MCF 10A (cell line): ENCODE measurements at regions of chr18 and their contacts with region 1.

Region 1: GRCh38 chr18:23703057-23703986 is 14.1 kb downstream of the LAMA3 start:
- DNase-seq: peak; percentile 76
- H3K4me3 Mint-ChIP-seq: no peak overlapping the region
- H3K27ac Mint-ChIP-seq: no peak overlapping the region
- H3K4me1 Mint-ChIP-seq: peaks cover 5% of the 10 kb centered on the region
- H3K27me3 Mint-ChIP-seq: no peaks in the 10 kb centered on the region
- CTCF ChIP-seq: peak; percentile 62

Region 2: DNA sequence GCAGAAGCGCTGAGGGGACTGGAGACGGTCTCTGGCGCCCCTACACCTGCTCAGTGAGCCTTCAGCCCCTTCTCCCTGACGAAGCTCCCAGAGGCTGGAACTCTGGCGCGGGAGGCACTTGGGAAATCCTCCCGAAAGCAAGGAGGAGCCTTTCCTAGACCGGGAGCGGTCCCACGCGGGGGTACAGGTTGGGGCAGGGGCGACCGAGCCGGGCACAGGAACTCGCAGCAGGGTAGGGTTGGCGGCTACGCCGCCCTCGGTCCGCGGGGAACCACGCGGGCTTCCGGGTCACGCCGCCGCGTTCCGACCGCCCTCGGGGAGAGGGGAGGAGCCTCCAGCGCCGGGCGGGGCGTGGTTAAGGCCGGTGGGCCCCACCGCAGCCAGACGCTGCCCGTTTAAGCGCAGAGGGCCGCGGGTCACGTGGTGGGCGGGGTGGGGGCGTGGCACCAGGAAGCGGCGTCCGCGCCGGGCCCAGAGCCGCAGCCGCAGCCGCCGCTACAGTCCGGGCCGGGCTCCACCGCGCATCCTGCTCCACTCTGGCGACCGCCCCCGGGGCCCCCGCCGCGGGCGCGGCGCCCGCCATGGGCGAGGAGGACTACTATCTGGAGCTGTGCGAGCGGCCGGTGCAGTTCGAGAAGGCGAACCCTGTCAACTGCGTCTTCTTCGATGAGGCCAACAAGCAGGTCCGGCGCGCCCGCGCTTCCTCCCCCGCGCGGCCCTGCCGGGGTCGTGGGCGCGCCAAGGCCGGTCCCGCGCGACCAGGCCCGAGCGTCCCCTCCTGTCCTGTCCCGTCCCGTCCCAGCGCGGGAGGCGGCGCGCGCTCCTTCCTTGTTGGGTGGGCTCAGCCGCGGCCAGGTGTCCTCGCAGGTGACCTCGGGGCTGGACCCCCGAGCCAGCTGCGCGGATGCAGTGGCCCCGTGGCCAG is 200.0 kb before region 1 on chr18 and contains the start of gene RMC1:
- CTCF ChIA-PET with region 1: interaction called, 8 read pairs
- POLR2A ChIA-PET with region 1: interaction called, 4 read pairs
- intact Hi-C with region 1: loop called (anchors 1 kb)
- DNase-seq: peak; percentile 91
- H3K4me3 Mint-ChIP-seq: peak within 1 kb of the TSS; percentile 81
- H3K27ac Mint-ChIP-seq: peak within 1 kb of the TSS; percentile 92
- H3K4me1 Mint-ChIP-seq: peaks cover 12% of the 10 kb centered on the region
- H3K27me3 Mint-ChIP-seq: no peaks in the 10 kb centered on the region
- CTCF ChIP-seq: no peak
- total RNA-seq, gene RMC1: 24.7 and 28.0 TPM in 2 replicates

Region 3: DNA sequence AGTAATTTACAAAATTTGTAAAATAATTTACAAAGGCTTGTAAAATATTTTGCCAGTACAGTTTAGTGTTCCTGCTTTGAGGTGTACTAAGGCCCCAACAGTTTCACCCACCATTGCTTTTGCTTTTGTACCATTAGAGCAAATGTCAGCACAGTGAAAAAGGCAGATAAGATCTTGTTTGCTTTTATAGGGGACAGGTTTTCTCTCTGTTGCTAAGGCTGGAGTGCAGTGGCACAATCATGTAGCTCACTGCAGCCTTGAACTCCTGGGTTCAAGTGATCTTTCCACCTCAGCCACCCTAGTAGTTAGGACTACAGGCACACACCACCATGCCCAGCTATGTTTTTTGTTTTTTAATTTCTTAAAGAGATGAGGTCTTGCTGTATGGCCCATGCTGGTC is 97.4 kb before region 1 on chr18:
- CTCF ChIA-PET with region 1: interaction called, 13 read pairs
- POLR2A ChIA-PET with region 1: no interaction called
- intact Hi-C with region 1: no loop called
- DNase-seq: no peak
- H3K4me3 Mint-ChIP-seq: no peak overlapping the region
- H3K27ac Mint-ChIP-seq: no peak overlapping the region
- H3K4me1 Mint-ChIP-seq: no peaks in the 10 kb centered on the region
- H3K27me3 Mint-ChIP-seq: no peaks in the 10 kb centered on the region
- CTCF ChIP-seq: no peak

Region 4: GRCh38 chr18:23635283-23636070 is 67.8 kb before region 1 on chr18:
- CTCF ChIA-PET with region 1: interaction called, 17 read pairs
- POLR2A ChIA-PET with region 1: no interaction called
- intact Hi-C with region 1: no loop called
- DNase-seq: peak; percentile 65
- H3K4me3 Mint-ChIP-seq: no peak overlapping the region
- H3K27ac Mint-ChIP-seq: peak overlapping the region; percentile 55
- H3K4me1 Mint-ChIP-seq: peaks cover 24% of the 10 kb centered on the region
- H3K27me3 Mint-ChIP-seq: no peaks in the 10 kb centered on the region
- CTCF ChIP-seq: no peak

Region 5: GRCh38 chr18:23689031-23689615 is 14.2 kb before region 1 on chr18 and contains the start of gene LAMA3:
- CTCF ChIA-PET with region 1: interaction called, 22 read pairs
- POLR2A ChIA-PET with region 1: interaction called, 5 read pairs
- intact Hi-C with region 1: no loop called
- DNase-seq: peak; percentile 58
- H3K4me3 Mint-ChIP-seq: peak within 1 kb of the TSS; percentile 70
- H3K27ac Mint-ChIP-seq: no peak within 1 kb of the TSS
- H3K4me1 Mint-ChIP-seq: no peaks in the 10 kb centered on the region
- H3K27me3 Mint-ChIP-seq: no peaks in the 10 kb centered on the region
- CTCF ChIP-seq: peak; percentile 9
- total RNA-seq, gene LAMA3: 269 and 371 TPM in 2 replicates

Region 6: DNA sequence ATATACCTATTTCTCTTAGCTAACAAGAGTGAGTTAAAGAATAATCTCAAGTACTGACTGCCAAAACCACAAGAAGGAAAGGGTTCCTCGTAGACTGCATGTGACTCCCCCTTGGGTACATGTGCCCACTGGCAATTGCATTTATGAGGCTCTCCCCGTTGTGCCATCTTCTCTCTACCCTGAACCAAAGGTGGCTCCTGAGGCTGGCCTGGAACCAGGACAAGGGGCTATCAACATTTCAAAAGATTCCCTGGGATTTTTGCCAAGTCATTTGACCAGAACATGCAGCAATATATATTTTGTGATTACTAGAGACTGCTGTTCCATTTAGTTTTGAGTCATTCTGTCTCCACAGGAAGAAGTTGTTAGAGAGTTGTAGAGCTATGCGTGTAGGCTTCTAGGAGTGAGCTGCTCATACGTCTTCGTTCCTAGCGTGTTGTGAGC is 31.7 kb after region 1 on chr18:
- CTCF ChIA-PET with region 1: no interaction called
- POLR2A ChIA-PET with region 1: no interaction called
- intact Hi-C with region 1: no loop called
- DNase-seq: peak; percentile 35
- H3K4me3 Mint-ChIP-seq: no peak overlapping the region
- H3K27ac Mint-ChIP-seq: no peak overlapping the region
- H3K4me1 Mint-ChIP-seq: peaks cover 7% of the 10 kb centered on the region
- H3K27me3 Mint-ChIP-seq: no peaks in the 10 kb centered on the region
- CTCF ChIP-seq: no peak

Region 7: DNA sequence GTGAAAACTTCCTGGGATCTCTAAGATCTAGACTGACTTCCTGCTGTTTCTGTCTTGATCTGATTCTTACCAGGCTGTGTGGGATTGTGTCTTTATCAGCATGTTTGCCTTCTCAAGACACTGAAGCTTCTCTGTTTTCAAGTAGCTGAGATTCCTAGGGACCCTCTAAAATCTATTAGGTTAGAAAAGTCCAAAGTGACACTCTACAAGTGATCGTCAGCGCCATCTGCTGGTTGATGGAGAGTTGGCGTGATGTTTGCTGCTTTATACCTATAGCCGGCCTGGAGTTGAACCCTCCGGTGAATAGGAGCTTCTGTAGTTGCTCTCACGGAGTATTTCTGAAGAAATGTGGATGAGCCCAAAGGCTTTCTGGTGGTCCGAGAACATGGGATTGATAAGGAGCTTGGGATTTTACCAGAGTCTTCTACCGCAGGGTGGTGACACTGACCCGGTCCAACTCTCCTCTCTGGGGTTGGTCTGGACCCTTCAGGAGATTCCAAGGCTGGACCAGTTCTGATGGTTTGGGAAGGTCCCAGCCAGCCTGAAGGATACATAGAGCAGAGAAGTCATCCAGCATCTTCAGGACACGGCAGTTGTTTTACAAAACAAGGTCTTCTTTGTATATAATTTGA is 215.2 kb after region 1 on chr18:
- CTCF ChIA-PET with region 1: interaction called, 3 read pairs
- POLR2A ChIA-PET with region 1: no interaction called
- intact Hi-C with region 1: loop called (anchors 1 kb)
- DNase-seq: peak; percentile 84
- H3K4me3 Mint-ChIP-seq: no peak overlapping the region
- H3K27ac Mint-ChIP-seq: peak overlapping the region; percentile 57
- H3K4me1 Mint-ChIP-seq: peaks cover 18% of the 10 kb centered on the region
- H3K27me3 Mint-ChIP-seq: no peaks in the 10 kb centered on the region
- CTCF ChIP-seq: peak; percentile 74

Region 8: DNA sequence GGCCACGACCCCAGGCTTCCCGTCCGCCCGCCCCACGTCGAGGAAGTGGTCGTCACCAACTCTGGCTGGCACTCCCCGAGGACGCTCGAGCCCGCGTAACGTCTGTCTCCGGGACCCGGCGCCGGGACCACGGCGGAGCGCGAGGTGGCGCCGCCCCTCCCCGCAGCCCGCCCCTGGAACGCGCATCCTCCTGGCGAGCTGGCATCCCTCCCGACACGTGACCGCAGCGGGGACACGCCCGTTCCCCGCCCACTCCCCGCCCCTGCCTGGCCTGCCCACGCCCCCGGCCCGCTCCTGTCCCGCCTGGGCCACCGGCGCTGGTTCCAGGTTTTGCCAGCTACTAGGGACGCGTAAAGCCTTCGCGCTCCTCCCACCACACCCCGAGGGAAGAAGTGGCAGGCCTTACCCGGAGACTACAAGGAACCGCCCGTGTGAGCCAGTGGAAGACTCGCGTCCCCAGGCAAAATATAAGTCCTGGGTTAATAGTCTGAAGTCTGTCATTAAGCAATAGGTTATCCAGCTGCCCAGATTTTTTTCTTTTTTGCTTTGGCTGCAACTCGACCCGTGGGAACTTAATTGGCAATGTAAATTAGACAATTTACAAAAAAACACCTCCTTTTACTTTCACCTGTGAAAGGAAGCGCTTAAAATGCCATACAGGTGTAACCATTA is 694.5 kb after region 1 on chr18 and contains the start of gene OSBPL1A:
- CTCF ChIA-PET with region 1: no interaction called
- POLR2A ChIA-PET with region 1: no interaction called
- intact Hi-C with region 1: no loop called
- DNase-seq: peak; percentile 94
- H3K4me3 Mint-ChIP-seq: peak within 1 kb of the TSS; percentile 77
- H3K27ac Mint-ChIP-seq: peak within 1 kb of the TSS; percentile 88
- H3K4me1 Mint-ChIP-seq: peaks cover 8% of the 10 kb centered on the region
- H3K27me3 Mint-ChIP-seq: no peaks in the 10 kb centered on the region
- CTCF ChIP-seq: no peak
- total RNA-seq, gene OSBPL1A: 14.8 and 21.5 TPM in 2 replicates

Region 9: GRCh38 chr18:25650201-25650941 is 1947.0 kb after region 1 on chr18:
- CTCF ChIA-PET with region 1: no interaction called
- POLR2A ChIA-PET with region 1: no interaction called
- intact Hi-C with region 1: no loop called
- DNase-seq: no peak
- H3K4me3 Mint-ChIP-seq: no peak overlapping the region
- H3K27ac Mint-ChIP-seq: no peak overlapping the region
- H3K4me1 Mint-ChIP-seq: no peaks in the 10 kb centered on the region
- H3K27me3 Mint-ChIP-seq: no peaks in the 10 kb centered on the region
- CTCF ChIP-seq: no peak